WTC11 (cell line): ENCODE measurements at regions of chr11 and their contacts with region 1.

Region 1: GRCh38 chr11:64935359-64936081 is at the start of gene GPHA2:
- DNase-seq: peak; percentile 80
- ATAC-seq: peak; percentile 88
- H3K4me3 Mint-ChIP-seq: peak within 1 kb of the TSS; percentile 50
- H3K27ac Mint-ChIP-seq: peak within 1 kb of the TSS; percentile 90
- H3K4me1 Mint-ChIP-seq: peaks cover 24% of the 10 kb centered on the region
- H3K27me3 Mint-ChIP-seq: no peaks in the 10 kb centered on the region
- CTCF ChIP-seq: no peak
- total RNA-seq, gene GPHA2: 1.0 to 1.6 TPM (median 1.6 TPM) in 3 replicates

Region 2: GRCh38 chr11:64916775-64917662 is 18.5 kb before region 1 on chr11 and contains the start of gene ATG2A:
- CTCF ChIA-PET with region 1: interaction called, 10 read pairs
- POLR2A ChIA-PET with region 1: no interaction called
- DNase-seq: peak; percentile 99
- ATAC-seq: peak; percentile 98
- H3K4me3 Mint-ChIP-seq: peak within 1 kb of the TSS; percentile 88
- H3K27ac Mint-ChIP-seq: peak within 1 kb of the TSS; percentile 98
- H3K4me1 Mint-ChIP-seq: peaks cover 13% of the 10 kb centered on the region
- H3K27me3 Mint-ChIP-seq: no peaks in the 10 kb centered on the region
- CTCF ChIP-seq: no peak
- total RNA-seq, gene ATG2A: 25.2 to 31.4 TPM (median 27.6 TPM) in 3 replicates